SK-N-SH (cell line): ENCODE measurements at regions of chr1 and their contacts with region 1.

Region 1: DNA sequence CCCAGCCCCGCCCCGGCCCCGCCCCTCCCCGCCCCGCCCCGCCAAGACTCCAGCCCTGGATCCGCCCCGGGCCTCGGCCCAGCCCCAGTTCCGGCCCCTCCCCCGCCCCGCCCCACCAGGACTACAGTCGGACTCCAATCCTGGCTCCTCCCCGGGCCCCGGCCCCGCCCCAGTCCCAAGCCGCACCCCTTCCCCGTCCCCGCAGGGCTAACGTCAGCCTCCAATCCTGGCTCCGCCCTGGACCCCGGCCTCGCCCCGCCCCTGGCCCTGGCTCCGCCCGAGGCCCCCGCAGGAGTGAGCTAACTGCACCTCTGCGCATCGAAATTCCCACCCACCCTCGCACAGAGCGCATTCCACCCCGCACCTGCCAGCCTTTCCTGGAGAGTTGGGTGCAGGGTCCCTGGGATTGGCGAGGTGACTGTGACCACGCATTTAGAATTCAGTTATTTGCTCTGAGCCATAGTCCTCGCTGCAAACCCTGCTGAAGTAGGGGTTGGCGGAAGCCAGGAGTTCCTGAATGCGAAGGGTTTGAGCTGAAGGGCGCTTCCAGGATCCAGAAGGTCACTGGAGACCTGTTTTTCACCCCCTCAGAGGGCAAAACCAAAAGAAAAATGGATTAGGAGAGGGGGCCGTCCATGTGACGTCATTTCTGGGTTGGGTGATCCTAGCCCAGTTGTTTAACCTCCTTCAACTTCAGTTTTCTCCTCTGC is 588 bp upstream of the IGSF8 start:
- DNase-seq: peak; percentile 98
- H3K4me3 ChIP-seq: peak overlapping the region; percentile 36 to 44; a peak in 3 of 4 replicates
- H3K27ac ChIP-seq: peak overlapping the region; percentile 35 to 55; a peak in 3 of 4 replicates
- H3K4me1 ChIP-seq: peaks cover 7 to 28% of the 10 kb centered on the region in 2 experiments; a peak in 1 of 4 replicates
- H3K27me3 ChIP-seq: no peaks in the 10 kb centered on the region
- CTCF ChIP-seq: no peak
- EP300 ChIP-seq: no peak
- RAD21 ChIP-seq: no peak

Region 2: GRCh38 chr1:159132271-159132881 is 966.6 kb before region 1 on chr1:
- CTCF ChIA-PET with region 1: no interaction called
- POLR2A ChIA-PET with region 1: no interaction called
- DNase-seq: peak; percentile 47
- H3K4me3 ChIP-seq: no peak overlapping the region; a peak in 1 of 4 replicates
- H3K27ac ChIP-seq: no peak overlapping the region
- H3K4me1 ChIP-seq: no peaks in the 10 kb centered on the region
- H3K27me3 ChIP-seq: peaks cover 23% of the 10 kb centered on the region; the same call in 1 of the 2 replicates
- CTCF ChIP-seq: peak; percentile 97
- EP300 ChIP-seq: no peak
- RAD21 ChIP-seq: peak; percentile 86

Region 3: DNA sequence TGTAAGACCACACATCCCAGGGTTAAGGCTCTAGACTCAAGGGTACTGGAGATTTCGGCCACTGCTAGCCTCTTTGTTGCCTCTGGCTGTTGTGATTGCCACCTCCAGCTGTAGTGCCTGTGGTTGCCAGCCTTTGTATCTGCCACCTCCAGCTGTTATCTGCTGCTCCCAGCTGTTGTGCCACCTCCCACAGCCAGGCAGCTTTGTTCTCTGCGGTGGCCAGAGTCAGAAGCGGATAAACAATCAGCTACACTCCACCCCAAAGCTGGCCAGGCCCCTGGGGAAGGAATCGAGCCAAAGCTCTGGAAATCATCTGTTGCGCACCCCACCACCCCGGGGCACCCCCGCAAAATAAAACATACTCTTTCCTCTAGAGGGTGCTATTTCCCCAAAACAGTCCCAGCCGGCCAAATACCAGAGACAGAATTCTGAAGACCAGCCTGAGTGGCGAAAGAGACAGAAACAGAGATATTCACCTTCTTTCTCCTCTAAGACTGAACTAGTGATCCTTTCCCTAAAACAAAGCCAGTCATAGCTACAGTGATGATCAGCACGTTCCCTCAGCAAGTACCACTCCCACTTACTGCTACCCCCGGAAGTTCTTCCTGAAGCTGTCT is 52.4 kb before region 1 on chr1:
- CTCF ChIA-PET with region 1: interaction called, 28 read pairs
- POLR2A ChIA-PET with region 1: no interaction called
- DNase-seq: peak; percentile 80
- H3K4me3 ChIP-seq: no peak overlapping the region
- H3K27ac ChIP-seq: no peak overlapping the region
- H3K4me1 ChIP-seq: peaks cover 0 to 11% of the 10 kb centered on the region in 2 experiments; a peak in 2 of 4 replicates
- H3K27me3 ChIP-seq: peaks cover 30% of the 10 kb centered on the region; the same call in 1 of the 2 replicates
- CTCF ChIP-seq: peak; percentile 67
- EP300 ChIP-seq: peak in 1 of 2 experiments; percentile 27; a peak in 1 of 4 replicates
- RAD21 ChIP-seq: peak; percentile 77

Region 4: DNA sequence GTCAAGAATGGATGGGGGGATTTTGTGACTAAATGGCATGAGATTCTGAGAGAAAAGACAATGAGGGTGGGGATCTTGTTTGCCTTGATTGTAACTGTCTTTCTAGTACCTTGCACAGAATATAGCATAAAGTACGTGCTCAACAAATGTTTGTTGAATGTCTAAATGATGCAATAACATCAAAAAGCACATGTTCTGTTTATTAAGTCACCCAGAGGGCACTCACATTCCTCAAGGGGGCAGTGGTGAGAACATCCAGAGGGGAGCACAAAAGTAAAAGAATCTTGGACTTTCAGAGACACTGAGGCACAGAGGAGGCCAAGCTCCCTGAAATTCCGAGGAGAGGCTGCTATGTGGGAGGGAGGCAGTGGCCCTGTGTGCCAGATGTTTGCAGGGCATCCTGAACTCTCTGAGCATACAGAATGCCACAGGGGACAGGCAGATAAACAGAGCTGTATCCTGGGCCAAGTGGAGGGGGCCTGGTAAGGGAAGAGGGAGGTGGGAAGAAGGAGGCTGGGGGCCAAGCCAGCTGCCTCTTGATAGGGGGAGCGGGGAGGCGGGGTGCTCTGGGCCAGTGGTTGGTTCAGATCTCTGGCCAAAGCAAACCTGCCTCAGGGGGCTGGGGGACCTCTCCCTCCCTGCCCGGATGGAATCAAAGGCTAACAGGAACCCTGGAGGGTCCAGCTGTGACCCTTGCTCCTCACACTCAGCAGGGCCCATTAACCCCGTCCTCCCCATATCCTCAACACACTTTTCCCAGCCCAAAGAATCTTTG is 10.1 kb after region 1 on chr1:
- CTCF ChIA-PET with region 1: interaction called, 15 read pairs
- POLR2A ChIA-PET with region 1: no interaction called
- DNase-seq: peak; percentile 63
- H3K4me3 ChIP-seq: no peak overlapping the region
- H3K27ac ChIP-seq: no peak overlapping the region
- H3K4me1 ChIP-seq: peaks cover 0 to 9% of the 10 kb centered on the region in 2 experiments; a peak in 1 of 4 replicates
- H3K27me3 ChIP-seq: 0 out of 2 replicates have a peak, but pooled peaks cover 3% of the 10 kb centered on the region
- CTCF ChIP-seq: peak; percentile 64
- EP300 ChIP-seq: no peak
- RAD21 ChIP-seq: no peak

Region 5: GRCh38 chr1:160211046-160211790 is 112.2 kb after region 1 on chr1:
- CTCF ChIA-PET with region 1: interaction called, 21 read pairs
- POLR2A ChIA-PET with region 1: no interaction called
- DNase-seq: peak; percentile 44
- H3K4me3 ChIP-seq: no peak overlapping the region
- H3K27ac ChIP-seq: peak overlapping the region; percentile 43 to 67
- H3K4me1 ChIP-seq: peaks cover 40 to 53% of the 10 kb centered on the region in 2 experiments
- H3K27me3 ChIP-seq: no peaks in the 10 kb centered on the region
- CTCF ChIP-seq: no peak
- EP300 ChIP-seq: no peak
- RAD21 ChIP-seq: no peak

Region 6: GRCh38 chr1:160244209-160244608 is 145.2 kb after region 1 on chr1:
- CTCF ChIA-PET with region 1: interaction called, 105 read pairs
- POLR2A ChIA-PET with region 1: no interaction called
- DNase-seq: no peak
- H3K4me3 ChIP-seq: no peak overlapping the region
- H3K27ac ChIP-seq: no peak overlapping the region
- H3K4me1 ChIP-seq: peaks cover 0 to 8% of the 10 kb centered on the region in 2 experiments; a peak in 1 of 4 replicates
- H3K27me3 ChIP-seq: no peaks in the 10 kb centered on the region
- CTCF ChIP-seq: no peak
- EP300 ChIP-seq: no peak
- RAD21 ChIP-seq: no peak

Region 7: GRCh38 chr1:160284782-160285344 is 185.9 kb after region 1 on chr1 and contains the start of gene PEX19:
- CTCF ChIA-PET with region 1: interaction called, 102 read pairs
- POLR2A ChIA-PET with region 1: no interaction called
- DNase-seq: peak; percentile 93
- H3K4me3 ChIP-seq: peak within 1 kb of the TSS; percentile 74 to 77
- H3K27ac ChIP-seq: peak within 1 kb of the TSS; percentile 55 to 81
- H3K4me1 ChIP-seq: peaks cover 6 to 15% of the 10 kb centered on the region in 2 experiments
- H3K27me3 ChIP-seq: no peaks in the 10 kb centered on the region
- CTCF ChIP-seq: no peak
- EP300 ChIP-seq: no peak
- RAD21 ChIP-seq: no peak
- polyA plus RNA-seq, gene PEX19: 31.4 and 52.1 TPM in 2 replicates

Region 8: GRCh38 chr1:160413716-160414115 is 314.7 kb after region 1 on chr1:
- CTCF ChIA-PET with region 1: no interaction called
- POLR2A ChIA-PET with region 1: no interaction called
- DNase-seq: no peak
- H3K4me3 ChIP-seq: no peak overlapping the region
- H3K27ac ChIP-seq: no peak overlapping the region
- H3K4me1 ChIP-seq: peaks cover 0 to 15% of the 10 kb centered on the region in 2 experiments; a peak in 1 of 4 replicates
- H3K27me3 ChIP-seq: no peaks in the 10 kb centered on the region
- CTCF ChIP-seq: no peak
- EP300 ChIP-seq: no peak
- RAD21 ChIP-seq: no peak